Astrocyte of the cerebellum (primary cell): ENCODE measurements at regions of chr4 and their contacts with region 1.

Region 1: GRCh38 chr4:94605241-94605805 is 152.4 kb upstream of the BMPR1B start:
- DNase-seq: no peak
- H3K4me3 ChIP-seq: no peak overlapping the region
- CTCF ChIP-seq: no peak

Region 2: GRCh38 chr4:94406668-94407437 is 198.5 kb before region 1 on chr4:
- in situ Hi-C with region 1: loop called (anchors 5 kb)
- DNase-seq: peak; percentile 89
- H3K4me3 ChIP-seq: no peak overlapping the region
- CTCF ChIP-seq: peak; percentile 86